ENCODE measurements at regions of chr11 and their contacts with region 1.

Region 1: GRCh38 chr11:113494021-113494420 is 18.8 kb upstream of the DRD2 start:
- DNase-seq: no peak
- H3K4me3 ChIP-seq: no peak overlapping the region
- H3K27ac ChIP-seq: no peak overlapping the region
- H3K4me1 ChIP-seq: peaks cover 13% of the 10 kb centered on the region
- H3K27me3 ChIP-seq: no peaks in the 10 kb centered on the region
- CTCF ChIP-seq: peak in 1 of 2 donors; percentile 26

Region 2: DNA sequence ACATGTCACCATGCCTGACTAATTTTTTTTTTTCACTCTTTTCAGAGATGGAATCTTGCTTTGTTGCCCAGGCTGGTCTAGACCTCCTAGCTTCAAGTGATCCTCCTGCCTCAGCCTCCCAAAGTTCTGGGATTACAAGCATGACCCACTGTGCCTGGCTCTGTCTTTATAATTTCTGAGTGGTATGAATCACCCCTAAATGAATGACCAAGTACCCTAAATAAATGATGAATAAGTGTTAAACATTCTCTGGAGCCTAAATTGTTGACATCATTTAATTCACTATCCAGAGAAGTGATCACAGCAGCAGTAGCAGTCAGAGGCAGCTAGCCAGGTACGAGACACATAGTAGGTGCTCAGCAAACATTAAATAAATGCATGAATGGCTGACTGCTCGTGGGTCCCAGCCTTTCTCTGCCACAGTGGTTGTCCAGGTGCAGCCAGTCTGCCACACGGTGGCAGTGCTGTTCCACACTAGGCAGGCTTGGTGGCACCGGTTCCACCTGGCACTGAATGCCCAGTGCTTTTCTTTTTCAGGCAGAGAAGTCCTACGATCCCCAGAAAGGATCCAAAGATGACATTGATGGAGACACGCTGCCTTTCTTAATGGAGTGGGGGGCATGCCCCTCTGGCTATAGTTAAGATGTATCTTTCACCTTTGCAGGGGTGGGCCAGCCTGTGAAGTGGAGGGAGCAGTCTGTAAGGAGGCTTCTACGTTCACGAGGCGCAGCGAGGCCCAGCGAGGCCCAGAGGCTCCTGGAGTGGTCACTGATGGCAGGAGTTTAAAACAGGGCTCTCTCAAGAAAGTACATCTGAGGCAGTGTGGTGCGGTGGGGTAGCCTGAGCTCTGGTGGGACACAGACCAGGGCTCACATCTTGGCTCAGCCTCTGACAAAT is 188.3 kb before region 1 on chr11:
- CTCF ChIA-PET with region 1: no interaction called
- dilution Hi-C with region 1: no loop called
- in situ Hi-C with region 1: no loop called
- intact Hi-C with region 1: loop called (anchors 1 kb)
- DNase-seq: peak; percentile 61
- H3K4me3 ChIP-seq: no peak overlapping the region
- H3K27ac ChIP-seq: no peak overlapping the region
- H3K4me1 ChIP-seq: peaks cover 13% of the 10 kb centered on the region
- H3K27me3 ChIP-seq: no peaks in the 10 kb centered on the region
- CTCF ChIP-seq: peak; percentile 99

Region 3: DNA sequence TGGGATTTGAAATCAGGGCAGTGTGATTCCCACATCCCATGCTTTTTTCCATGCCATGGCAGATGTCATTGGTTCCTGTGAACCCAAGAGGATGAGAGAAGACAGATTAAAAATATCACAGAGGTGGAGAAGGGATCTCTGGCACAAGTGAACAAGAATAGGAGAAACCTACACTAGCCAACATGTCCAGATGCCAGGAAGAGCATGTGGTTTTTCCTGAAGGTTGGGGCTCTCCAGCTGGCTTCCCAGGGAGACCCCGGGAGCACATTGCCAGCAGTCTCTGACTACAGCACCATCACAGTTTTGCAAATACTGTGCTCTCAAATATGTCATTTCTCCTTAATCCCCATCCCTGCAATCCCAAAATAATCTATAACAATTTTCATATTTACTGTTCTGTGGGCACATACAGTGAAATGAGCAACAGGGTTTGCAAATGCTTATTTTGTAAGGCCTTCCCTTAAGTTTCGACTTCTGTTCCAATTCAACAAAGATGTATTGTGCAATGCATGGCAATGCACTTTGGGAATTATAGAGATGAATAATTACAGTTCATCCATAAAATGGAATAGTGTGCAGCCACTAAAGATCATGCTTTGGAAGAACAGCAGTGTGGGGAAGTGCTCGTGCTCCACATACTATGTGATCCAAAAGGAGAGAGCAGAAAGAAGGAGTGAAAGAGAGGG is 101.6 kb before region 1 on chr11:
- CTCF ChIA-PET with region 1: no interaction called
- dilution Hi-C with region 1: no loop called
- in situ Hi-C with region 1: no loop called
- intact Hi-C with region 1: no loop called
- DNase-seq: no peak
- H3K4me3 ChIP-seq: no peak overlapping the region
- H3K27ac ChIP-seq: no peak overlapping the region
- H3K4me1 ChIP-seq: peaks cover 10% of the 10 kb centered on the region
- H3K27me3 ChIP-seq: no peaks in the 10 kb centered on the region
- CTCF ChIP-seq: no peak

Region 4: GRCh38 chr11:113457784-113458183 is 36.2 kb before region 1 on chr11:
- CTCF ChIA-PET with region 1: no interaction called
- dilution Hi-C with region 1: no loop called
- in situ Hi-C with region 1: no loop called
- intact Hi-C with region 1: no loop called
- DNase-seq: no peak
- H3K4me3 ChIP-seq: no peak overlapping the region
- H3K27ac ChIP-seq: no peak overlapping the region
- H3K4me1 ChIP-seq: no peaks in the 10 kb centered on the region
- H3K27me3 ChIP-seq: no peaks in the 10 kb centered on the region
- CTCF ChIP-seq: no peak

Region 5: DNA sequence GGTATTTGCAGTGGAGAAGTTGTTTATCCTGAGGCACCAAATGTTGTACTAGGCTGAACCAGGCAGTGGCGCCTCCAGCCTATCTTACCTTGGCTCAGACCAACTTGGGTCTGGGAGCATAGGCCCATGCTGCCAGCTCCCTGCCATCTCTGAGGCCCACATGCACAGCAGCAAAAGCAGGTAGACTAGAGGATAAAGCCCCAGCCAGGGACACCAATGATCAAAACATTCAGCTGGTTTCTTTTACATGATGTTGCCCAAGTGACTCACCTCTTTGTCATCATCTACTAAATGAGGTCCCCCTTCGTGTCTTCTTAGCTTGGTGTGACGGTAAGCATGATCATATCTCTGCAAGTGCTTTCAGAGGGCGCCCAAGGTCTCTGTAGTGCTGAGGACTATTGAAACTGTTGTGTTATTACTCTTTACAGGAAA is 93.3 kb after region 1 on chr11:
- CTCF ChIA-PET with region 1: no interaction called
- dilution Hi-C with region 1: loop called (anchors 5 kb)
- in situ Hi-C with region 1: no loop called
- intact Hi-C with region 1: no loop called
- DNase-seq: peak; percentile 50
- H3K4me3 ChIP-seq: no peak overlapping the region
- H3K27ac ChIP-seq: no peak overlapping the region
- H3K4me1 ChIP-seq: no peaks in the 10 kb centered on the region
- H3K27me3 ChIP-seq: no peaks in the 10 kb centered on the region
- CTCF ChIP-seq: peak in 1 of 2 donors; percentile 10